ENCODE measurements at regions of chr17 and their contacts with region 1.

Region 1: DNA sequence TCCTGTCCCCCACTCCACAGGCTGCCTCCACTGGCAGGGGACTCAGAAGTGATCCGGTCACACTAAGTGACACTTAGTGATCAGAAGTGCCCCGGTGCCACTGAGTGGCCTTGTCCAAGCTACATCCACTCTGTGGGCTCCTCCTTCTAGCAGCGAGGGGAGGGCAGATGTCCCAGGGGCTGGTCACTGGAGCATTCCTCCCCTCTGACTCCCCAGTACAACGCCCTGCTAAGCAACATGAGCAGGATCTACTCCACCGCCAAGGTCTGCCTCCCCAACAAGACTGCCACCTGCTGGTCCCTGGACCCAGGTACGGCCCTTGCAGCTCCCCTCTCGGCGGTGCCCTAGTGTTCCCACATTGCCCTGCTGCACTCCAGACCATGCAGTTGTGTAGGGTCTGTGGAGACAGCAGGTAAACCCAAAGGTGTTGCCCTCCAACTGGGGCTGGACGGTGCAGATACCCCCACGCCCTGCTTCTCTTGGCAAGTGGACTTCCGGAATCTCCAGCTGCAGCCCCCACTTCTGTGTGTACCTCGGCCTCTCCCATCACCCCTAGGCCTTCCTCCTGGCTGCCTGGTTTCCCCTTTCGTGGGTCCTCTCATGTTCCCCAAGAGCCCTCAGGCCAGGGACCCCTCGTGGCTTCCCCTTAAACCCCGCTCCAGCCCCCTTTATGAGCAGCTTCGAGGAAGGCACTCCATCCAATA is 2.1 kb downstream of the ACE start:
- DNase-seq: peak; percentile 91

Region 2: DNA sequence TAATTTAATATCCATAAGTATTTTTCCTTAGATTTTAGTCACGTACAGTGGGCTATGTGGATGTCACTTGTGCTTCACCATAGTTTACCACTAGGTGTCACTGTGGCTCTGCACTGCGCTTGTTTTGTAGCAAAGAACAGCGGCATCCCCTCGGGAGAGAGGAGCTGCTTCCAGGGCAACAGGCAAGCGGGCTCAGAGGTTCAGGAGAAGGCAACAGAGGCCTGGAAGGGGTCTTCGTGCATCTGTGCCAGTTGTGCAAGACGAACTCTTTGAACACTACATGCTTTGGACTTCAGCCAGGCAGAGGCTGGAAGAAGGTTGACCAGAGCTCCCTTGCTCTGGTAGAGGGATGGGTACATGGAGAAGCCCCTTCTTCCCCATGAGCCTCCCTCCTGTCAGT is 53.5 kb before region 1 on chr17:
- CTCF ChIA-PET with region 1: interaction called, 46 read pairs
- POLR2A ChIA-PET with region 1: interaction called, 10 read pairs
- DNase-seq: peak; percentile 86

Region 3: DNA sequence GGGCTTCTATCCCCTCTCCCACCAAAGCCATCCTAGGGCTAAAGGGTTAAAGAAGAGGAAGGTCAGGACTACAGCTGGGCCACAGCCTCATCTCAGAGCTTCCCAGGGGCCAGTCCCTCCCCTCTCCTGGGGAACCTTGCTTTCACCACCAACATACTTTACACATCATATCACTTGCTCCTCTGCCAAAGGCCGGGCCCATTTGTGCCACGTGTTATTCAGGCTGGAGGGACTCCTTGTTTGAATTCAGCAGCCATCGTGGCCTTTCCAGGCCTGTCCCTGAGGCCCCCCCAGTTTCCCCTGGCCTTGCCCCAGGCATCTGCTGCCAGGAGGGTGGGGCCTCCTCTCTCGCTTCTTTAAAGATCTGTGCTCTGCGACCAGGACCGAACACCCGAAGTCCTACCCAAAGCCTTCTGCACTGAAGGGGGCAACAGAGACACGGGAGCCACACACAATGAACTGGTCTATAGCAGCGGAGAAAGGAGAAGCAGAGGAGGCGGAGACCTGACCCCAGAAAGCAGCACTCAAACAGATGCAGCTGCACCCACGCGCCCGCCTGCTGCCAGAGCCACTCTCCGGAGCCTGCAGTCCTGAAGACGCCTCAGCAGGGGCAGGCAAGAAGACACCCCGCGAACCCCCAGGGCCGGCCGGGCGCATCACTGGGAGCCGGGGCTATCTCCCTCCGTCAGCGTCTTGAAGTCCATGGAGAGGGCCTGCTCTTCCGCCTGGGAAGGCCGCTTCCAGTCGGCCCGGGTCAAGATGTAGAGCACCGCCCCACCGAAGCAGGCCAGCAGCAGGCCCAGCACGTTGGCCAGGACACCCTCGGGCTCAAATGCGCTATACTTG is 45.0 kb before region 1 on chr17:
- CTCF ChIA-PET with region 1: interaction called, 7 read pairs
- POLR2A ChIA-PET with region 1: interaction called, 14 read pairs
- DNase-seq: no peak

Region 4: DNA sequence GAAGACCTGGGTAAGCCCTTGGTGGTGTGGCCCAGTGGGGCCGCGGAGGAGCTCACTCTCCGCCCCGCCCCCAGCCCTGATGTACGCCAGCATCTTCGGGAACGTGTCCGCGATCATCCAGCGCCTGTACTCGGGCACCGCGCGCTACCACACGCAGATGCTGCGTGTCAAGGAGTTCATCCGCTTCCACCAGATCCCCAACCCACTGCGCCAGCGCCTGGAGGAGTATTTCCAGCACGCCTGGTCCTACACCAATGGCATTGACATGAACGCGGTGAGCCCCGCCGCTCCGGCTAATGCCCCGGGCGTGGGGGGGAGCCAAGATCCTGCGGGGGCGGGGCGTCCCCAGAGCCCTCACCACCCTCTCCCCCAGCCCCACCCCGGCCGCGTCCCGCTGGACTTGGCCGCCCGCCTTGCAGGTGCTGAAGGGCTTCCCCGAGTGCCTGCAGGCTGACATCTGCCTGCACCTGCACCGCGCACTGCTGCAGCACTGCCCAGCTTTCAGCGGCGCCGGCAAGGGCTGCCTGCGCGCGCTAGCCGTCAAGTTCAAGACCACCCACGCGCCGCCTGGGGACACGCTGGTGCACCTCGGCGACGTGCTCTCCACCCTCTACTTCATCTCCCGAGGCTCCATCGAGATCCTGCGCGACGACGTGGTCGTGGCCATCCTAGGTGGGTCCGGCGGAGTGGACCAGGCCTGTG is 59.2 kb after region 1 on chr17:
- CTCF ChIA-PET with region 1: no interaction called
- POLR2A ChIA-PET with region 1: no interaction called
- DNase-seq: no peak

Region 5: GRCh38 chr17:63601439-63602371 is 122.8 kb after region 1 on chr17:
- CTCF ChIA-PET with region 1: no interaction called
- POLR2A ChIA-PET with region 1: no interaction called
- DNase-seq: no peak